ENCODE measurements at regions of chr1 and their contacts with region 1.

Region 1: DNA sequence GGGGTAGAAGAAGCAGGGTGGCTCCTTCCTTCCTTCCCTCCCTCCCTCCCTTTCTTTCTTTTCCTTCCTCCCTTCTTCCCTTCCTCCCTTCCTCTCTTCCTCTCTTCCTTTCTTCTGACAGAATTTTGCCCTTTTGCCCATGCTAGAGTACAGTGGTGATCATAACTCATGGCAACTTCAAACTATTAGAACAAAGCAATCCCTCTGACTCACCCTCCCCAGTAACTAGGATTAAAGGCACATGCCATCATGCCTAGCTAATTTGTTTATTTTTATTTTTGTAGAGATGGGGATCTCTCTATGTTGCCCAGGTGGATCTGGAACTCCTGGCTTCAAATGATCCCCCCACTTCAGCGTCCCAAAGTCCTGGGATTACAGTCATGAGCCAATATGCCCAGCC is 10.0 kb upstream of the RPE65 start:
- DNase-seq: no peak
- H3K4me3 ChIP-seq: no peak overlapping the region
- H3K27ac ChIP-seq: no peak overlapping the region
- H3K4me1 ChIP-seq: no peaks in the 10 kb centered on the region
- H3K27me3 ChIP-seq: no peaks in the 10 kb centered on the region
- CTCF ChIP-seq: no peak
- POLR2A ChIP-seq: no peak

Region 2: GRCh38 chr1:66671455-66671854 is 1788.3 kb before region 1 on chr1:
- intact Hi-C with region 1: no loop called
- DNase-seq: no peak
- H3K4me3 ChIP-seq: no peak overlapping the region
- H3K27ac ChIP-seq: no peak overlapping the region
- H3K4me1 ChIP-seq: no peaks in the 10 kb centered on the region
- H3K27me3 ChIP-seq: no peaks in the 10 kb centered on the region
- CTCF ChIP-seq: no peak
- POLR2A ChIP-seq: no peak

Region 3: DNA sequence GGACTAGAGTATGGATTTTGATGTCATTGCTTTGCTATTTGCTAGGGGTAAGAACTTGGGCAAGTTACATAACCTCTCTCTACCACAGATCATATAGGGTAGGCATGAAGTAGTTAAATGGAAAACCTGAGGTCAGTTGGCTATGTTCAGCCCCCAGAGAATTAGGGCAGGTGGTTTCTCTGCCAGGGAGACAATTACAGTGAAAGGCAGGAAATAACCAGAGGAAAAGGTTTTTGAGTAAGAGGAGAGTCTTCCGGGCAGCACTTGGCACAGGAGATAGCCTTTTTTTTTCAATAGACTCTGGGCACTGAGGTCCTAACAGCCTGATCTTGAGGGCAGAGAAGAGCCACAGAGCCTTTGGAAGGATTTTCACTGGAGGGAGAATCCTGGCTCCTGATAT is 1012.9 kb before region 1 on chr1:
- intact Hi-C with region 1: no loop called
- DNase-seq: no peak
- H3K4me3 ChIP-seq: no peak overlapping the region
- H3K27ac ChIP-seq: no peak overlapping the region
- H3K4me1 ChIP-seq: no peaks in the 10 kb centered on the region
- H3K27me3 ChIP-seq: no peaks in the 10 kb centered on the region
- CTCF ChIP-seq: no peak
- POLR2A ChIP-seq: no peak

Region 4: DNA sequence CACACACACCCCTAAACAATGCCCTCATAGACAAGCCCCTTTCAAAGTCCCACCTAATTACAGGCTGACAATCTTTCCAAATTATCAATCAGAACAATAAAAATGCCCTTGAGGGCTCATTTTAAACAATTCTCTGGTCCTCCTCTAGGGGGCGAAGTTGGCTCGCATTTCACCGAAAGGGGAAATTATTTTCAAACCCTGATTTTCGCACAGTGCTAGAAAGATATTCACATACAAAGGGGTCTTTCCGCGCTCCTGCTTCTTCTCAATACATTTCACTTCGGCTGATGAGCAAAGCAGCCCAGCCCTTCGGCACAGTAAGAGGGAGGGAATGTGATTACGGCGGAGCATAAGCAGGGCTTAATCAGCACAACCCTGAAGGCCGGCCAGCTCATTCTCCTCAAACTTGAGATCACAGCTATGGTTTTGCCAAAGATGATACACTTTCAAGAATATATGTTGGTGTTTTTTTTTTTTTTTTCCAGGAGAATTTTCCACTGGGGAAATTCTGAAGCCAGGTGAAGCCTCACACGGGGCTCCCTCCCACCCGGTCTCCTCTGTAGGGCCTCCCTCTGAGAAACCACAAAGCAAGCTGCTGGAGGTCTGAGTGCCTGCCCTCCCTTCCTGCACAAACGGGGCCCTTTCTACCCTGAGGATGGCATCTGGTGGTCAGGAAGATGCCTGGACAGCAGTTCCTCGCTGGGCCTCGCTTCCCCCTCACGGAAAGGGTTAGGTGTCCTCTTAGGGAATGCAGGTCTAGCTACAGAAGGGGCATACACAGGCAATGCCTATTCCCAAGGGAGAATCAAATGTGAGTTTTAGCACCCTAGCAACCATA is 693.4 kb before region 1 on chr1:
- intact Hi-C with region 1: loop called (anchors 5 kb)
- DNase-seq: no peak
- H3K4me3 ChIP-seq: peak overlapping the region in 2 of 3 donors; percentile 19 to 47
- H3K27ac ChIP-seq: peak overlapping the region in 1 of 2 donors; percentile 20
- H3K4me1 ChIP-seq: no peaks in the 10 kb centered on the region
- H3K27me3 ChIP-seq: no peaks in the 10 kb centered on the region
- CTCF ChIP-seq: peak; percentile 85 to 89 (median 86)
- POLR2A ChIP-seq: no peak

Region 5: DNA sequence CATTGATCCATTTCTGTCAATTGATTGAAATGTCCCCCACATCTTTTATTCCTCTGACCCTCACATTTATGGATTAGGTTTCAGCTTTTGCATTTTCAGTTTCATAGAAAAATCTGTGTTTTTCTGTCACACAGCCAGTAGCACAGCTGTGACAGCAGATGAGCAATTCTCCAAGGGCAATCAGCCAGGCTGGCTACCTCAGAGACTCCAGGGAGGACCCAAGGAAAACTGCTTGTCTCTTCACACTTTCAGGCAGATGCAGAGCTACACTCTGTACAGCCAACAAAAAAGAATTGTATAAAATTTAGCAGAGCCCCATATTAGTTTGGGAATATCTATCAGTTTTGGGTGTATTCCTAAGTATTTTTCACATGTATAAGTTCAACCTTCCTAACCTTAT is 1365.1 kb after region 1 on chr1:
- intact Hi-C with region 1: no loop called
- DNase-seq: no peak
- H3K4me3 ChIP-seq: no peak overlapping the region
- H3K27ac ChIP-seq: no peak overlapping the region
- H3K4me1 ChIP-seq: no peaks in the 10 kb centered on the region
- H3K27me3 ChIP-seq: no peaks in the 10 kb centered on the region
- CTCF ChIP-seq: no peak
- POLR2A ChIP-seq: no peak